Activated CD4-positive, alpha-beta T cell treated with anti-CD3 and anti-CD28 coated beads, Interleukin-2, amount 10 ng/mL, durations not matched to agents 24 days and 14 days (primary cell): ENCODE measurements at regions of chr9 and their contacts with region 1.

Region 1: GRCh38 chr9:128863647-128864046 is 18.1 kb downstream of the KYAT1 start:
- DNase-seq: peak; percentile 96
- H3K4me3 Mint-ChIP-seq: no peak overlapping the region
- H3K27ac Mint-ChIP-seq: peak overlapping the region; percentile 51
- H3K4me1 Mint-ChIP-seq: peaks cover 6% of the 10 kb centered on the region
- H3K27me3 Mint-ChIP-seq: no peaks in the 10 kb centered on the region

Region 2: GRCh38 chr9:128875790-128876160 is 12.1 kb after region 1 on chr9:
- intact Hi-C with region 1: no loop called
- DNase-seq: no peak
- H3K4me3 Mint-ChIP-seq: no peak overlapping the region
- H3K27ac Mint-ChIP-seq: no peak overlapping the region
- H3K4me1 Mint-ChIP-seq: peaks cover 21% of the 10 kb centered on the region
- H3K27me3 Mint-ChIP-seq: no peaks in the 10 kb centered on the region

Region 3: GRCh38 chr9:128927731-128928411 is 64.2 kb after region 1 on chr9:
- intact Hi-C with region 1: loop called (anchors 1 kb)
- DNase-seq: peak; percentile 86
- H3K4me3 Mint-ChIP-seq: no peak overlapping the region
- H3K27ac Mint-ChIP-seq: no peak overlapping the region
- H3K4me1 Mint-ChIP-seq: peaks cover 11% of the 10 kb centered on the region
- H3K27me3 Mint-ChIP-seq: no peaks in the 10 kb centered on the region